ENCODE measurements at regions of chr14 and their contacts with region 1.

Region 1: DNA sequence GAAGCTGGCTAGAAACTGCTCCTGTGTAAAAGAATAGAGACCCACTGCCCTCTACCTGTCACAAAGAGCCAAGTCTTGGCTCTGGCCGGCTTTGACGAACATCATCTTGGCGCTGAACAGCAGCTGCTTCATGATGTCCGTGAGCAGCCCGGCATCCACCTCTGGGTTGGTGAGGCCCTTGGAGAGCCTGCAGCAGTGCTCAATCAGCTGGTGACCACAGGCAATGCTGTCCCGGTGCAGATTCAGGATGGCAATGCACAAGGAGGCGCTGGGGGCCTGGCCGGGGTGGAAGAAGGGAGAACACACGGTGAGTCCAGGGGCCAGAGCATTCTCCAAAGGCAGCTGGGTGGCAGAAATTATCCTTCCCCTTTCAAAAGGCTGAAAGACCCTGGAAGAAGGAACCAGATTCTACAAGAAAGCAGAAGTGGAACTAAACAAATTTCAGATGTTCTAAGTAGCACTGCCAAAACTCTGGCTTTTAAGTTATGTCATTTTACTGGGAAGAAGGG is 50.2 kb downstream of the ZFYVE26 start:
- DNase-seq: no peak
- ATAC-seq: no peak
- H3K4me3 ChIP-seq: no peak overlapping the region
- H3K27ac ChIP-seq: no peak overlapping the region
- H3K4me1 ChIP-seq: no peaks in the 10 kb centered on the region
- H3K27me3 ChIP-seq: no peaks in the 10 kb centered on the region
- CTCF ChIP-seq: no peak

Region 2: GRCh38 chr14:67749341-67750084 is 16.7 kb before region 1 on chr14:
- intact Hi-C with region 1: no loop called
- DNase-seq: no peak
- ATAC-seq: no peak
- H3K4me3 ChIP-seq: no peak overlapping the region
- H3K27ac ChIP-seq: no peak overlapping the region
- H3K4me1 ChIP-seq: no peaks in the 10 kb centered on the region
- H3K27me3 ChIP-seq: no peaks in the 10 kb centered on the region
- CTCF ChIP-seq: no peak

Region 3: DNA sequence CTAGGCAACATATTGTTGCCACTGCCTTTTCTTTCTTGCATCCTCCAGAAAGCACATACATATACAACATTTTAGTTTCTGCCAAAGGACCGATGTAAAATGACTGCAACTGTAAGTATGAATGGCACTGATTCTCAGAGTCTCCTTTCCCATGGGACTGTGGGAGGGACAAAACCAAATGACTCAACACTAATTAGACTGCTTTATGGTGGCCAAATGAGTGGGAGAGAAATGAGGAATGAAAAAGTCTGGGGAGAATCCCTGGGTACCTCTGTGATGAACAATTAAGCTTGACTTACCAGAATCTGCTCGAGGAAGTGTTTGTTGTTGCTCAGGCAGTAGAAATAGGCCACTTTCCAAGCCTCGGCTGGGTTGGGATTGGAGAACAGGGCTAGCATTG is 40.0 kb after region 1 on chr14:
- intact Hi-C with region 1: loop called in 1 of 2 experiments (anchors 5 kb)
- DNase-seq: no peak
- ATAC-seq: no peak
- H3K4me3 ChIP-seq: no peak overlapping the region
- H3K27ac ChIP-seq: no peak overlapping the region
- H3K4me1 ChIP-seq: peaks cover 6% of the 10 kb centered on the region
- H3K27me3 ChIP-seq: no peaks in the 10 kb centered on the region
- CTCF ChIP-seq: no peak

Measured in psoas muscle (tissue), 8 donors.